Activated CD8-positive, alpha-beta memory T cell treated with anti-CD3 and anti-CD28 coated beads, Interleukin-2, amount 10 ng/mL, durations not matched to agents 7 days and 5 days (primary cell): ENCODE measurements at regions of chr19 and their contacts with region 1.

Region 1: GRCh38 chr19:46394402-46394797 is 19.0 kb downstream of the CCDC8 start:
- DNase-seq: no peak
- ATAC-seq: no peak
- H3K4me3 Mint-ChIP-seq: no peak overlapping the region
- H3K27ac Mint-ChIP-seq: no peak overlapping the region
- H3K4me1 Mint-ChIP-seq: peaks cover 3% of the 10 kb centered on the region
- H3K27me3 Mint-ChIP-seq: peaks cover 11% of the 10 kb centered on the region

Region 2: GRCh38 chr19:46346821-46347571 is 47.4 kb before region 1 on chr19 and contains the start of gene PPP5C:
- CTCF ChIA-PET with region 1: interaction called, 27 read pairs
- DNase-seq: peak; percentile 93
- ATAC-seq: peak; percentile 75
- H3K4me3 Mint-ChIP-seq: peak within 1 kb of the TSS; percentile 93
- H3K27ac Mint-ChIP-seq: peak within 1 kb of the TSS; percentile 91
- H3K4me1 Mint-ChIP-seq: peaks cover 52% of the 10 kb centered on the region
- H3K27me3 Mint-ChIP-seq: peaks cover 9% of the 10 kb centered on the region
- total RNA-seq, gene PPP5C: 99.2 to 110 TPM

Region 3: DNA sequence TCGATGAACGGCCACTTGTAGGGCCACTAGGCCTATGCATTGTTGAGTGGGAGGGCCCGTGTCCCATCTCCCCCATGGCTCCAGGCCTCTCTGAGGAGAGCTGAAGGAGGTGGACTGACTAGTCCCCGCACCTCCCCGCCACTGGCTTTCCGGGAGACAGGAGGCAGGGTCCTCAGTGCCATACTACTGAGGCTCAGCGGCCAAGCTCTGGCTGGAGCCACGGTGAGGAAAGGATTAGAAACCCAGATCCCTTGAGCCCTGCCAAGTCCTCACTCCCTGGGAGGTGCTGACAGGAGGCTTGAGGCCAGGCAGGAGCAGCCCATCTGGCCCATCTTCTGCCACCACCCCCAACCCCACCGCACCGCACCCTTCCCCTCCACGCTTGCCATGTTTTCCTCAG is 10.0 kb before region 1 on chr19:
- CTCF ChIA-PET with region 1: interaction called, 20 read pairs
- DNase-seq: no peak
- ATAC-seq: no peak
- H3K4me3 Mint-ChIP-seq: no peak overlapping the region
- H3K27ac Mint-ChIP-seq: no peak overlapping the region
- H3K4me1 Mint-ChIP-seq: no peaks in the 10 kb centered on the region
- H3K27me3 Mint-ChIP-seq: no peaks in the 10 kb centered on the region

Region 4: GRCh38 chr19:46487802-46488445 is 93.5 kb after region 1 on chr19:
- CTCF ChIA-PET with region 1: interaction called, 71 read pairs
- DNase-seq: peak; percentile 77
- ATAC-seq: peak; percentile 67
- H3K4me3 Mint-ChIP-seq: no peak overlapping the region
- H3K27ac Mint-ChIP-seq: no peak overlapping the region
- H3K4me1 Mint-ChIP-seq: no peaks in the 10 kb centered on the region
- H3K27me3 Mint-ChIP-seq: peaks cover 80% of the 10 kb centered on the region

Region 5: GRCh38 chr19:46520616-46521015 is 126.2 kb after region 1 on chr19:
- CTCF ChIA-PET with region 1: interaction called, 57 read pairs
- DNase-seq: no peak
- ATAC-seq: no peak
- H3K4me3 Mint-ChIP-seq: no peak overlapping the region
- H3K27ac Mint-ChIP-seq: peak overlapping the region; percentile 43
- H3K4me1 Mint-ChIP-seq: peaks cover 38% of the 10 kb centered on the region
- H3K27me3 Mint-ChIP-seq: peaks cover 2% of the 10 kb centered on the region